Naive thymus-derived CD8-positive, alpha-beta T cell (primary cell): ENCODE measurements at regions of chr3 and their contacts with region 1.

Region 1: GRCh38 chr3:51498876-51499738 is 708 bp downstream of the DCAF1 start:
- DNase-seq: peak; percentile 61 to 86 (median 73)
- ATAC-seq: peak; percentile 41 to 61
- H3K4me3 Mint-ChIP-seq: peak overlapping the region; percentile 88 to 100 (median 98)
- H3K27ac Mint-ChIP-seq: peak overlapping the region; percentile 87 to 98 (median 97)
- H3K4me1 Mint-ChIP-seq: peaks cover 8 to 34% (median 27%) of the 10 kb centered on the region in 4 donors
- H3K27me3 Mint-ChIP-seq: peaks cover 0 to 2% (median 0%) of the 10 kb centered on the region in 5 donors

Region 2: DNA sequence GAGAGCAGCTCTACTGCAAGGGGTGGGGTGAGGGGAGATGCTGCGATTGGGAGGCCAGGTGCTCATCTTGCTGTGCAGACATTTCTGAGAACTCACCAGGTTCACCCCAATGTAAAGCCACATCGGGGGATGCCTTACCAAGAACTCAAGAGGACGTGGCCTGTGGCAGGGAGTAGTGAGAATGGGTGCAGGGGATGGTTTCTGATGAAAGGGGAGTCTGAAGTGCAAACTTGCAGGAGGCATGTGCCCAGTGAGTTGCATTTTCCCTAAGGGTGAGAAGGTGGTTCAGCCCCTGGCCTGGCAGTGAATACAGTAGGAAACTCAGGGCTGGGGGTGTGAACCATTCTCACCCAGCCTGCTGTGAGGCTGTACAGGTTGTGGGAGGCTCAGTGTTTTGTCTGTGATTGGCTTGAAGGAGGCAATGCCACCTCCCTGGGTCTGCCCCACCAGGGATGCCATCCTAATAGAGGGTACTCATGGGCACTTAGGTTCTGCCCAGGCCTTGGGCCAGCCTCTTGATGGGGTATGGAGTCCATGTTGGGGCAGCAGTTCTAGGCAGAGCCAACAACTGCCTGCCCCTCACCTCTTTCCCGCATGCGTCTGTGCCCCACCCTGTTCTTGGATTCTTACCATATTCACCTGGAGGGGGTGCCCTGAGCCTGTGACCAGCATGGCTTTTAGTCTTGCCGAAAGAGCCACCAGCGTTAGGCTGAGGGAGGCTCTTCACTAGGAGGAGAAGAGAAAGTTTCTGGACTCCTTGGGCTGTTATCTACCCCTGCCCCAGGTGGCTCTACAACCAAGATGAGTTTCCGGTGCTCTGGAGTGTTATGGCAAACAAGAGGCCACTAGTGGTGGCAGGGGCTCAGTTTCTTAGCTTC is 925.3 kb before region 1 on chr3:
- POLR2A ChIA-PET with region 1: no interaction called
- DNase-seq: peak in 5 of 10 donors; percentile 14 to 64 (median 45)
- ATAC-seq: peak in 1 of 2 donors; percentile 9
- H3K4me3 Mint-ChIP-seq: peak overlapping the region; percentile 23 to 82 (median 65)
- H3K27ac Mint-ChIP-seq: peak overlapping the region; percentile 88 to 98 (median 92)
- H3K4me1 Mint-ChIP-seq: peaks cover 25 to 80% (median 75%) of the 10 kb centered on the region in 4 donors
- H3K27me3 Mint-ChIP-seq: no peaks in the 10 kb centered on the region

Region 3: GRCh38 chr3:51384726-51385473 is 114.2 kb before region 1 on chr3 and contains the start of gene MANF:
- POLR2A ChIA-PET with region 1: interaction called, 35 read pairs
- DNase-seq: peak; percentile 92 to 98 (median 97)
- ATAC-seq: peak; percentile 95 to 96
- H3K4me3 Mint-ChIP-seq: peak within 1 kb of the TSS; percentile 96 to 100 (median 99)
- H3K27ac Mint-ChIP-seq: peak within 1 kb of the TSS; percentile 97 to 100 (median 99)
- H3K4me1 Mint-ChIP-seq: peaks cover 20 to 52% (median 51%) of the 10 kb centered on the region in 4 donors
- H3K27me3 Mint-ChIP-seq: no peaks in the 10 kb centered on the region
- polyA plus RNA-seq, gene MANF: 41.6 to 45.3 (median 44.4) TPM

Region 4: DNA sequence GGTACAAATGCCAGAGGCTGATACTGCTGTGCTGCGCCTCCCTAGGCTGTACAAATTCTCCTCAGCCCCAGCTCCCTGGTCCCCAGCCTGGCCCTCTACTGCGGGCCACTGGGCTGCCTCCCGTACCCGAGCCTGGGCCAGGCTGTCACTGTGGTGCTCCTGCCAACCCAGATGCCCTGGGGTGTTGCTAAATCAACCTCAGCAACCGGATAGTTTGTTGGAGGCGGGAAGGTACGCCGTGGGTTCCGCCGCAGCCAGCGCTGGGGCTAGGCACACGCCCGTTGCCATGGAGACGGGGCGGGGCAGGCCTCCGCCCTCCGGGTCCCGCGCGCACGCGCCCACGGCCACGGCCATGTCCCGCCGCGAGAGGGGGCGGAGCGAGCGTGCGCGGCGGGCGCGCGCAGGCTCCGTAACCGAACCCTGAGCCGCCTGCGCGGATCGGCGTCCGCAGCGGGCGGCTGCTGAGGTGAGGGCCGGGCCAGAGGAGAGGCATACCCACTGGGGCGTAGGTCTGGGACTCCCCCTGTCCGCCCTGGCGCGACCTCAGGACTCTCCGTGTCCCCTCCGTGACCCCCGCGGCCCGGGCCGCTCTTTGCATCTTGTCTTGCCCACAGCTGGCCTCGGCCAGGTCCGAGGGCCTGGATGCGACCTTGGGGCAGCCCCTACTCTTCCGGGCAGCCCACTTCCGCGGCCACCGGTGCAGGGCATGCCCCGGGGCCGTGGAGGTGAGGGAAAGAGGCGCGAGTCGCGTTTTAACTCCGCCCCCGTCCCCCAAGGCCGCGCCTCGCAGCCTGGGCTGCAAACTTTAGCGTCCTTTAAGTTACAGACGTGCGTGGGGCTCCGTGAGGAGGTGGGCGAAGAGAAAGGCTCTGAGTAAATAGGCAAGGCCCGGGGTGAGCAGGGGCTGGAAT is 172.0 kb after region 1 on chr3 and contains the start of gene TEX264:
- POLR2A ChIA-PET with region 1: interaction called, 72 read pairs
- DNase-seq: peak; percentile 90 to 99 (median 94)
- ATAC-seq: peak; percentile 71 to 77
- H3K4me3 Mint-ChIP-seq: peak within 1 kb of the TSS; percentile 85 to 97 (median 90)
- H3K27ac Mint-ChIP-seq: peak within 1 kb of the TSS; percentile 82 to 95 (median 94)
- H3K4me1 Mint-ChIP-seq: peaks cover 39 to 74% (median 65%) of the 10 kb centered on the region in 4 donors
- H3K27me3 Mint-ChIP-seq: no peaks in the 10 kb centered on the region
- polyA plus RNA-seq, gene TEX264: 84.5 to 95.7 (median 85.3) TPM

Region 5: DNA sequence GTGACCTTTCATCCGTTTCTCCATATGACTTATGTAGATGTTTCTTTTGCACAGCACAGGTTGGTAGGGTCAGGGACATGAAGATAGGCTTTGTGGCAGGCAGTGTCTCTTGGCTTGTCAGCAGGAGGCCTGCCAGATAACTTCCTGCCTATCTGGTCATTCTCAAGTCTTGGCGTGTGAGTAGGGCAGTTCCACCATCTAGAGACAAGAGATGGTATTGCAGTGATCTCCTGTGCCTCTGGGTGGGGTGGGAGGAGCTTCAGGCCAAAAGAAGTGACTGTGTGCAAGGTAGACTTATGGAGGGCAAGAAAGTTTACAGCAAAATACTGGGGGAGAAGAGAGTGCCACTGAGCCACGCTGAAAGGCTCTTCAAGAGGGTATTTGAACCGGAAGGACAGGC is 183.0 kb after region 1 on chr3:
- POLR2A ChIA-PET with region 1: interaction called, 97 read pairs
- DNase-seq: peak; percentile 33 to 87 (median 76)
- ATAC-seq: peak; percentile 67 to 77
- H3K4me3 Mint-ChIP-seq: peak overlapping the region; percentile 56 to 92 (median 79)
- H3K27ac Mint-ChIP-seq: peak overlapping the region; percentile 15 to 94 (median 74)
- H3K4me1 Mint-ChIP-seq: peaks cover 73 to 99% (median 97%) of the 10 kb centered on the region in 4 donors
- H3K27me3 Mint-ChIP-seq: no peaks in the 10 kb centered on the region

Region 6: DNA sequence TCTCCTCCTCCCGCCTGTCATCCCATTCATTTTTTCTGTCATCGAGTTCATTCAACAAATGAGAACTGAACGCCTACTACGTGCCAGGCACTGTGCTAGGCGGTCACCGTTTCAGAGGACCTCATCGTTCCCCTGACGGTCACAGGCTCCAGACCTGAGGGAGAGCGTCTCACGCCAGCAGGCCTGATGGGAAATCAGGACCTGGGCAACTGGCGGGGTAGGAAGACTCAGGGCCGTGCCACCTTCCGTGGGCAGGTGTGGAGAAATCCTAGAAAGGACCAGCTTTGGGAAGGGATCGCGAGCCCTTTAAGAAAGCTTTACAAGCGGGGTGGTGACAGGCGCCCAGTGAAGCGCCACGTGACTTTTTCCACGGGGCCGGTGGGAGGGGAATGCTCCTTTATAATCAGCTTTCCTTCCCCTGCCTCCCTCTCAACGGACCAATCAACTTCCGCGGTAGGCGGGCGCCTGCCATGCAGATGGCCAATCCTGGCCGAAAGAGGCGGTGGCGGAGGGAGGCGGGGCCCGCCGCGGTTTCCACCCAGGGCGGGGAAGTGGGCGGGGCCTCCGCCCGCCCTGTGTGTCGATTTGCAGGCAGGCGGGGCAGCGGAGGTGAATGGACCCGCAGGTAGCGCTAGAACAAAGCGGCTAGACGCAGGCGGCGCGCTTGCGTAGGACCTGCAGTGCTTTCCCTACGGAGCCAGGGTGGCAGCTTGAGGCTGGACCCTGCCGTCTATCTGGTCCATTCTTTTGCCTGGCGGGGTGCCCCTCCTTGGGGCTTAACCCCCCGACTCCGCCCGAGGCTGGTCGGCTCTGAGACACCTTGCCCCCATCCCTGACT is 558.1 kb after region 1 on chr3:
- POLR2A ChIA-PET with region 1: interaction called, 10 read pairs
- DNase-seq: peak; percentile 92 to 100 (median 99)
- ATAC-seq: peak; percentile 81 to 87
- H3K4me3 Mint-ChIP-seq: peak overlapping the region; percentile 87 to 95 (median 92)
- H3K27ac Mint-ChIP-seq: peak overlapping the region; percentile 85 to 98 (median 93)
- H3K4me1 Mint-ChIP-seq: peaks cover 25 to 39% (median 34%) of the 10 kb centered on the region in 4 donors
- H3K27me3 Mint-ChIP-seq: no peaks in the 10 kb centered on the region